ENCODE measurements at regions of chr1 and their contacts with region 1.

Region 1: GRCh38 chr1:228902781-228903433 is 167.6 kb downstream of the RHOU start:
- DNase-seq: no peak
- ATAC-seq: no peak
- H3K4me3 ChIP-seq: no peak overlapping the region
- H3K4me3 Mint-ChIP-seq: no peak overlapping the region
- H3K27ac ChIP-seq: no peak overlapping the region
- H3K27ac Mint-ChIP-seq: no peak overlapping the region
- H3K4me1 ChIP-seq: no peaks in the 10 kb centered on the region
- H3K4me1 Mint-ChIP-seq: no peaks in the 10 kb centered on the region
- H3K27me3 ChIP-seq: no peaks in the 10 kb centered on the region
- H3K27me3 Mint-ChIP-seq: no peaks in the 10 kb centered on the region
- CTCF ChIP-seq: no peak

Region 2: GRCh38 chr1:228770779-228771223 is 132.1 kb before region 1 on chr1:
- CTCF ChIA-PET with region 1: no interaction called
- POLR2A ChIA-PET with region 1: no interaction called
- intact Hi-C with region 1: loop called in 1 of 2 experiments (anchors 10 kb)
- DNase-seq: no peak
- ATAC-seq: no peak
- H3K4me3 ChIP-seq: no peak overlapping the region
- H3K4me3 Mint-ChIP-seq: no peak overlapping the region
- H3K27ac ChIP-seq: no peak overlapping the region
- H3K27ac Mint-ChIP-seq: no peak overlapping the region
- H3K4me1 ChIP-seq: peaks cover 8% of the 10 kb centered on the region
- H3K4me1 Mint-ChIP-seq: peaks cover 2% of the 10 kb centered on the region
- H3K27me3 ChIP-seq: no peaks in the 10 kb centered on the region
- H3K27me3 Mint-ChIP-seq: no peaks in the 10 kb centered on the region
- CTCF ChIP-seq: no peak

Measured in CD4-positive, alpha-beta T cell (primary cell).